ENCODE measurements at regions of chr3 and their contacts with region 1.

Region 1: DNA sequence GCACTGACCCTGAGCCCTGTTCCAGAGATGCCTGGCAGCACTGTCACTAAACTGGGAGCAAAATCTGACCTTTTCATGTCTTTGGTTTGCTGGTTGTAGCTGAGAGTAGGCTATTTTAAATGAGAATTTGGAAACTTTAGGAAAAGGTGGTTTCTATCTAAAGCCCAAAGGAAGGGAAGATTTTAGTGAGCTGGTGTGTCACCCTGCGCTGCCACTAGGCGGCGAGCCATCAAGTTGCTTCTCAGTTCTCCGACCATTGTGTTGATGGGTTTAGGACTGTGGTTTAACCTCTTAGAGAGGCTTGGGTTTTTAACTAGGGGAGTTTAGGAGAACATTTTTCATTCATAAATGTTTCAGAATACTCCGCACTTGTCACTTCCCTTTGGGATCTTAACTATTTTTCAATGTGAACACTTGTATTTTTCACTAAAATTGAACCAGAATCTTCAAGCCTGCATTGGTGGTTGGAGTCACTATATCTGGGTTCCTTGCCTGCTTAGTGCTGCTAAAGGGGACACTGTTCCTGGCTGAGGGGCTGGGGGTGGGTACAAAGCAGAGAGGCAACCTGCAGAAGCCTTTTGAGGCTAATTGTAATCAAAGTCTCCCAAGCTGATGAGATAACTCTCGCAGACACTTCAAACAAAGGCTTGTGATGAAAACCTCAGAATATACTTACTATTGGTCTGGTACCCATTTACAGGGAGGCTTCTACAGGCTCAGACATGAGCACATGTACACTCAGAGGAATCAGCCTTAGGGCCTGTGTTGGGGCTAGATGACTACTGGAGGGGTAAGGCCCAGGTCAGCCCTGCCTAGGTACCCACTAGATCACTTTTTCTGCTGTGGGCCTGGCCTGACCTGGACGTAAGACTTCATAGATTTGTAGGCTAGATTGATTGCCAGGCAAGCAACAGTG is 16.8 kb downstream of the EXOSC7 start:
- DNase-seq: peak; percentile 17 to 47 (median 46)
- H3K4me3 ChIP-seq: no peak overlapping the region
- H3K27ac ChIP-seq: no peak overlapping the region
- H3K4me1 ChIP-seq: peaks cover 0 to 4% (median 1%) of the 10 kb centered on the region in 4 experiments
- H3K27me3 ChIP-seq: no peaks in the 10 kb centered on the region

Region 2: DNA sequence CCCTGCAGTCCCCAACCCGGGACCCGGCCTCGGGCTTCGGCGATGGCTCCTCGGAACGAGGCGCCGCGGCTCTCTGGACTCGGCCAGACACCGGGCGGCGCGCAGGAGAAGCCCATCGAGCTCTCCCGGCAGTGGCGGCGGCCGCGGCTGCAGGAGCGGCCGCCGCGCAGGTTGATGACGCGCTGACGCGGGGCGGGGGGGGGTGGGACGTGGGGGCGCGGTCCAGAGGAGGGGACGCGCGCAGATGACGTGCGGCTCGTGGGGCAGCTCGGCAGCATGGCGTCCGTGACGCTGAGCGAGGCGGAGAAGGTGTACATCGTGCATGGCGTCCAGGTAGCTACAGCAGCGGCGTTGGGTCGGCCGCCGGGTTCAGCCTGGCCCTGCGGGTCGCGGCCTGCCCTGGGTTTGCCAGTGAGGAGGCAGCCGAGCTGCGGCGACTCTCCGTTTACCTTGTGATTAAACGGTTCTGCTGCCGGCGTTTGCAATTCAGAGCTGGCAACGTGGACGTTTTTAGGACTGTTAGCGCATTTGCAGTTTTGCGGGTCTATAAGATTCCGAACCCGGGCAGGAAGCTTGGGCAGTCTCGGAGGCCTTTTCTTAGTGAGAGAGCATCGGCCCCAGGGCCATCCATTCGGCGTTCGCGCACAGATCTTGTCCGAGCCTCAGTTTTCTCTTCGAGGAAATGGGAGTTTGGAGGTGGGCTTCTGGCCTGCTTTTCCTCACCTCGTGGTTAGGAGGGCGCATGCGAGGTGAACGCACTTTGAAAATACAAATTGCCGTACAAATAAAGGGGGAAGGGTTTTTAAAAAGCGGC is 16.6 kb before region 1 on chr3 and contains the starts of genes EXOSC7 and ZDHHC3:
- CTCF ChIA-PET with region 1: interaction called, 19 read pairs
- POLR2A ChIA-PET with region 1: no interaction called
- DNase-seq: peak; percentile 88 to 93 (median 92)
- H3K4me3 ChIP-seq: peak within 1 kb of the TSS; percentile 85 to 98 (median 93)
- H3K27ac ChIP-seq: peak within 1 kb of the TSS; percentile 67 to 86
- H3K4me1 ChIP-seq: peaks cover 15 to 44% (median 27%) of the 10 kb centered on the region in 4 experiments
- H3K27me3 ChIP-seq: no peaks in the 10 kb centered on the region

Region 3: GRCh38 chr3:45011756-45012508 is 19.1 kb after region 1 on chr3:
- CTCF ChIA-PET with region 1: interaction called, 23 read pairs
- POLR2A ChIA-PET with region 1: interaction called, 3 read pairs
- DNase-seq: peak; percentile 82 to 97 (median 92)
- H3K4me3 ChIP-seq: peak overlapping the region in 3 of 7 experiments; percentile 1 to 39 (median 35)
- H3K27ac ChIP-seq: peak overlapping the region; percentile 52 to 74
- H3K4me1 ChIP-seq: peaks cover 4 to 58% (median 35%) of the 10 kb centered on the region in 4 experiments
- H3K27me3 ChIP-seq: no peaks in the 10 kb centered on the region

Measured in common myeloid progenitor, CD34-positive (primary cell).